ENCODE measurements at regions of chr17 and their contacts with region 1.

Region 1: GRCh38 chr17:80791758-80792284 is 199.8 kb upstream of the CHMP6 start:
- DNase-seq: peak; percentile 40
- H3K4me3 Mint-ChIP-seq: peak overlapping the region; percentile 73
- H3K27ac Mint-ChIP-seq: peak overlapping the region; percentile 92
- H3K4me1 Mint-ChIP-seq: peaks cover 72% of the 10 kb centered on the region
- H3K27me3 Mint-ChIP-seq: no peaks in the 10 kb centered on the region

Region 2: GRCh38 chr17:80649678-80650672 is 141.8 kb before region 1 on chr17:
- intact Hi-C with region 1: loop called (anchors 5 kb)
- DNase-seq: peak; percentile 53
- H3K4me3 Mint-ChIP-seq: peak overlapping the region; percentile 10
- H3K27ac Mint-ChIP-seq: peak overlapping the region; percentile 88
- H3K4me1 Mint-ChIP-seq: peaks cover 62% of the 10 kb centered on the region
- H3K27me3 Mint-ChIP-seq: no peaks in the 10 kb centered on the region

Region 3: DNA sequence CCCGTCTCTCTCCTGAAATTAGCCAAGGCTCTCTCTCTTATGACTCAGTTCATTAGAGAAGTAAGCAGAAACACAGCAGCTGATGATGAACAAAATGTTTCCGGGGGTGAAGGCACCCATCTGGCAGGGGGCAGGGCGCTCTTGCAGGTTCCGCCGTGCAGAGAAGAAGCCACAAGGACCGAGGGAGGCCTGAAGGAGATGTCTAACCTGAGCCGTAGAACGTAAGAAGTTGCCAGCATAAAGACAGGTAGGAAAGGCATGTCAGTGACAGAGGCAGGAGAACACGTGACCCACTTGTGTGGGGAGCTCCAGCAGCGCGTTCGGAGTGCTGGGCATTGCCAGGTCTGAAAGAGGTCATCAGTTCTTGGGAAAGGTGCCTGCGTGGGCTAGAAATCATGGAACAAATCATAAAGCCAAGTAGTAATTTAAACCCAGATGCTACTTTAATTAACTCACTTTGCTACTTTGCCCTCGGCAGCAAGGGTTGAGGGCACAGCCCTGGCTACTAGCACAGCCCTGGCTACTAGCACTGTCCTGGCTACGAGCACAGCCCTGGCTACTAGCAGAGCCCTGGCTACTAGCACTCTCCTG is 48.5 kb before region 1 on chr17:
- intact Hi-C with region 1: no loop called
- DNase-seq: peak; percentile 33
- H3K4me3 Mint-ChIP-seq: peak overlapping the region; percentile 56
- H3K27ac Mint-ChIP-seq: peak overlapping the region; percentile 81
- H3K4me1 Mint-ChIP-seq: peaks cover 51% of the 10 kb centered on the region
- H3K27me3 Mint-ChIP-seq: no peaks in the 10 kb centered on the region

Region 4: DNA sequence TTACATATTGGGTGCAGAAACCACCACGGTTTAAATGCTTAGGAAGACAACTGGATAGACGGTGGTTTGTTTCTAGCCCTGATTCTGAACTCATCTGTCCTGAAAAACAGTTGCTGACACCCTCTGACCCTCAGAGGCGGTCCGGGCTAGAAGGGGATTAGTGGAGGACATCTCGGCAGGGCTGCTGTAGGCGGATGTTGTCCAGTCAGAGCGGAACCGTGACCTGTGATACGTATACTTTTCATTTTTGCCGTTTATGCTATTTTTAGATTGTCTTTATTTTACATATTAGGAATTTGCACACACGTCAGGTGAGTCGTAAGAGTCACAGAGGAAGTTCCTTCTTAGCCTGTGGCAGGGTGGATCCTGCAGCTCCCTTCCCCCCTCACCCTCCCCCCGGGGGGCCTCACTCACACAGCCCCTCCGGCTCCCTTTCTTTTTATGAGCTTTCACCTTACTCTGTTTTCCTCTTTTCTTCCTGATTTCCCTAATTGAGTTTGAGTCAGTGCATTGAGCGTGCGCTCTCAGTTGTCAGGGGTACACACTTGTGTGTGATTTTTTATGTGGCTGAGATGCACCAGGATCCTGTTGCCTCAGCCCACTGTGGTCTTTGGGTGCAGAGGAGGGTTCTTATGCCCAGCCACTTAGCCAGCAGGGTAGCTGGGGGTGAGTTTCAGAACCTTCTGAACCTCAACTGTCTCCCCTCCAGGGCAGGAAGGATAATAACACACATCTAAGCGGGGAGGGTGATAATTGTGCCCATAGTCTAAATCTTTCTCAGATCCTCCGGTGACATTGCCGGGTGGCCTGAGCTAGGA is 11.2 kb before region 1 on chr17:
- intact Hi-C with region 1: loop called (anchors 1 kb)
- DNase-seq: peak; percentile 49
- H3K4me3 Mint-ChIP-seq: peak overlapping the region; percentile 49
- H3K27ac Mint-ChIP-seq: peak overlapping the region; percentile 92
- H3K4me1 Mint-ChIP-seq: peaks cover 72% of the 10 kb centered on the region
- H3K27me3 Mint-ChIP-seq: no peaks in the 10 kb centered on the region

Region 5: GRCh38 chr17:80817321-80818251 is 25.8 kb after region 1 on chr17:
- intact Hi-C with region 1: loop called (anchors 1 kb)
- DNase-seq: no peak
- H3K4me3 Mint-ChIP-seq: no peak overlapping the region
- H3K27ac Mint-ChIP-seq: peak overlapping the region; percentile 14
- H3K4me1 Mint-ChIP-seq: peaks cover 50% of the 10 kb centered on the region
- H3K27me3 Mint-ChIP-seq: no peaks in the 10 kb centered on the region

Region 6: GRCh38 chr17:80832888-80833583 is 41.2 kb after region 1 on chr17:
- intact Hi-C with region 1: loop called (anchors 2 kb)
- DNase-seq: peak; percentile 83
- H3K4me3 Mint-ChIP-seq: peak overlapping the region; percentile 77
- H3K27ac Mint-ChIP-seq: peak overlapping the region; percentile 94
- H3K4me1 Mint-ChIP-seq: peaks cover 47% of the 10 kb centered on the region
- H3K27me3 Mint-ChIP-seq: no peaks in the 10 kb centered on the region

Measured in activated T-helper 2 cell treated with anti-CD3 and anti-CD28 coated beads, Interferon-gamma antibody, Interleukin-2, Interleukin-4, amounts not matched to agents 10 μg/mL and 5 μg/mL and 100 μg/mL, durations not matched to agents 14 hours and 24 hours and 36 hours (primary cell).